GM12878 (cell line): ENCODE measurements at regions of chr15 and their contacts with region 1.

Region 1: DNA sequence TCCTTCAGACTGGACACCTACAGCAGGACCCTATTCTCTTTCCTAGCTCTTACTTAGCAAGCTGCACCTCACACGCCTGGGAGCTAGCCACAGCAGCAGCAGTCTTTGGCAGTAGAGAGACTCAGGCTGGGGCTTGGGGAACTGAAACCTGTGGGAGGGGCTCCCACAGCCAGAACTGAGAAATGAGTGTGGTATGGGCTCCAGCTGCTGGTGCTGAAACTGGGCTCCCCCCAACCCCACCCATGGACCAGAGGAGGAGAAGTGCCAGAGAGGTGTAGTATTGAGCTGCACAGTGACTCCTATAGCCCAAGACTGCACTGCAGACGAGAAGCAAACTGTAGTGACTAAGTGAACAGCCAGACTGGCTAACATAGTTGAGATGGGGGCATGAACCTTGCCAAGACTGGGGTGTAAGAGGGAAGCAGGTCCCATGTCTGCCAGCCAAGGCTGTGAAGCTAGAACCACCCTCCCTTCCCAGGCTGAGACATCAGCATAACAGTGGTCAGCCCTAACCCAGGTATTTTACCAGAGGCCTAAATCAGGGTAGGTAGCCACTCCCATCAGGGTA is 62.5 kb downstream of the MYO5A start:
- DNase-seq: peak; percentile 97
- ATAC-seq: peak; percentile 94
- H3K4me3 ChIP-seq: peak overlapping the region; percentile 58; the same call in 1 of the 2 replicates
- H3K27ac ChIP-seq: peak overlapping the region; percentile 99
- H3K4me1 ChIP-seq: peaks cover 47% of the 10 kb centered on the region
- H3K27me3 ChIP-seq: no peaks in the 10 kb centered on the region
- CTCF ChIP-seq: peak; percentile 55 to 66 (median 66)
- EP300 ChIP-seq: peak; percentile 91 to 98
- POLR2A ChIP-seq: peak; percentile 69
- RAD21 ChIP-seq: peak; percentile 70

Region 2: GRCh38 chr15:52200831-52201365 is 265.3 kb before region 1 on chr15:
- CTCF ChIA-PET with region 1: no interaction called
- POLR2A ChIA-PET with region 1: no interaction called
- RAD21 ChIA-PET with region 1: no interaction called
- SMC1A ChIA-PET with region 1: no interaction called
- in situ Hi-C with region 1: no loop called
- intact Hi-C with region 1: no loop called
- DNase-seq: no peak
- ATAC-seq: no peak
- H3K4me3 ChIP-seq: no peak overlapping the region
- H3K27ac ChIP-seq: no peak overlapping the region
- H3K4me1 ChIP-seq: peaks cover 3% of the 10 kb centered on the region; the same call in 1 of the 2 replicates
- H3K27me3 ChIP-seq: no peaks in the 10 kb centered on the region
- CTCF ChIP-seq: no peak
- EP300 ChIP-seq: no peak
- POLR2A ChIP-seq: no peak
- RAD21 ChIP-seq: no peak

Region 3: GRCh38 chr15:52256366-52256765 is 209.9 kb before region 1 on chr15:
- CTCF ChIA-PET with region 1: interaction called, 98 read pairs
- POLR2A ChIA-PET with region 1: no interaction called
- RAD21 ChIA-PET with region 1: interaction called, 32 read pairs
- SMC1A ChIA-PET with region 1: interaction called, 30 read pairs
- in situ Hi-C with region 1: no loop called
- intact Hi-C with region 1: loop called (anchors 5 kb)
- DNase-seq: peak; percentile 76
- ATAC-seq: peak; percentile 71
- H3K4me3 ChIP-seq: no peak overlapping the region
- H3K27ac ChIP-seq: no peak overlapping the region
- H3K4me1 ChIP-seq: peaks cover 12% of the 10 kb centered on the region
- H3K27me3 ChIP-seq: no peaks in the 10 kb centered on the region
- CTCF ChIP-seq: peak; percentile 68 to 82 (median 71)
- EP300 ChIP-seq: no peak
- POLR2A ChIP-seq: no peak
- RAD21 ChIP-seq: peak; percentile 88

Region 4: GRCh38 chr15:52337198-52337853 is 128.9 kb before region 1 on chr15:
- CTCF ChIA-PET with region 1: interaction called, 42 read pairs
- POLR2A ChIA-PET with region 1: interaction called, 4 read pairs
- RAD21 ChIA-PET with region 1: interaction called, 43 read pairs
- SMC1A ChIA-PET with region 1: interaction called, 81 read pairs
- in situ Hi-C with region 1: no loop called
- intact Hi-C with region 1: no loop called
- DNase-seq: no peak
- ATAC-seq: no peak
- H3K4me3 ChIP-seq: no peak overlapping the region
- H3K27ac ChIP-seq: no peak overlapping the region
- H3K4me1 ChIP-seq: no peaks in the 10 kb centered on the region
- H3K27me3 ChIP-seq: no peaks in the 10 kb centered on the region
- CTCF ChIP-seq: no peak
- EP300 ChIP-seq: no peak
- POLR2A ChIP-seq: no peak
- RAD21 ChIP-seq: no peak

Region 5: DNA sequence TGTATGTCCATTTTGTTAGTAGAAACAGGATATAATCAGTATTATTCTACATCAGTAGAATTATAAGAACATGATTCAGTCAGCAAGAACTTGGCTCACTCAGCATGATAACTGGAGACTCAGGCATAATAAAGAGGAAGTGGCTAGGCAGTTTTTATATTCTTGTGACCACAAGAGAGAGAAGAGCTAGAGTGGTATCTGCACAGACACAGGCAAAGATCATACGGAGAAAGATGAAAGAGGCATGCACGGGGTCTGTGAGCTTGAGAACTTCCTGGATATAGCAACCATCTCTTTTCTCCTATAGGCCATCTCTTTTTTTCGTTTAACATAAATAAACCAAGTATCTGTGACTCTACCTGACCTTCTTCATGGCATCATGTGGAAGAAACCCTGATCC is 15.7 kb after region 1 on chr15:
- CTCF ChIA-PET with region 1: interaction called, 17 read pairs
- POLR2A ChIA-PET with region 1: interaction called, 3 read pairs
- RAD21 ChIA-PET with region 1: interaction called, 22 read pairs
- SMC1A ChIA-PET with region 1: interaction called, 36 read pairs
- in situ Hi-C with region 1: no loop called
- intact Hi-C with region 1: no loop called
- DNase-seq: peak; percentile 81
- ATAC-seq: peak; percentile 98
- H3K4me3 ChIP-seq: peak overlapping the region; percentile 14; the same call in 1 of the 2 replicates
- H3K27ac ChIP-seq: peak overlapping the region; percentile 76
- H3K4me1 ChIP-seq: peaks cover 36% of the 10 kb centered on the region
- H3K27me3 ChIP-seq: no peaks in the 10 kb centered on the region
- CTCF ChIP-seq: no peak
- EP300 ChIP-seq: peak in 1 of 2 experiments; percentile 73; a peak in 3 of 4 replicates
- POLR2A ChIP-seq: no peak
- RAD21 ChIP-seq: no peak

Region 6: GRCh38 chr15:52528991-52529926 is 63.0 kb after region 1 on chr15:
- CTCF ChIA-PET with region 1: interaction called, 12 read pairs
- POLR2A ChIA-PET with region 1: no interaction called
- RAD21 ChIA-PET with region 1: interaction called, 42 read pairs
- SMC1A ChIA-PET with region 1: interaction called, 12 read pairs
- in situ Hi-C with region 1: no loop called
- intact Hi-C with region 1: loop called (anchors 1 kb)
- DNase-seq: no peak
- ATAC-seq: peak; percentile 83
- H3K4me3 ChIP-seq: peak overlapping the region; percentile 85
- H3K27ac ChIP-seq: peak overlapping the region; percentile 39; the same call in 1 of the 2 replicates
- H3K4me1 ChIP-seq: peaks cover 3% of the 10 kb centered on the region
- H3K27me3 ChIP-seq: no peaks in the 10 kb centered on the region
- CTCF ChIP-seq: peak in 1 of 3 experiments; percentile 35; a peak in 2 of 6 replicates
- EP300 ChIP-seq: no peak
- POLR2A ChIP-seq: 0 out of 2 replicates have a peak, but pooled peaks have one; percentile 18
- RAD21 ChIP-seq: peak; percentile 46

Region 7: GRCh38 chr15:52568601-52569256 is 102.5 kb after region 1 on chr15 and contains the start of gene ARPP19:
- CTCF ChIA-PET with region 1: interaction called, 32 read pairs
- POLR2A ChIA-PET with region 1: interaction called, 4 read pairs
- RAD21 ChIA-PET with region 1: interaction called, 37 read pairs
- SMC1A ChIA-PET with region 1: interaction called, 49 read pairs
- in situ Hi-C with region 1: no loop called
- intact Hi-C with region 1: loop called (anchors 5 kb)
- DNase-seq: peak; percentile 69
- ATAC-seq: peak; percentile 81
- H3K4me3 ChIP-seq: peak within 1 kb of the TSS; percentile 72
- H3K27ac ChIP-seq: peak within 1 kb of the TSS; percentile 93
- H3K4me1 ChIP-seq: peaks cover 7% of the 10 kb centered on the region
- H3K27me3 ChIP-seq: no peaks in the 10 kb centered on the region
- CTCF ChIP-seq: peak in 1 of 3 experiments; percentile 39; a peak in 2 of 6 replicates
- EP300 ChIP-seq: no peak
- POLR2A ChIP-seq: peak; percentile 81
- RAD21 ChIP-seq: peak; percentile 34
- polyA plus RNA-seq, gene ARPP19: 77.2 to 114 TPM

Region 8: GRCh38 chr15:52735231-52736089 is 269.2 kb after region 1 on chr15:
- CTCF ChIA-PET with region 1: interaction called, 4 read pairs
- POLR2A ChIA-PET with region 1: interaction called, 3 read pairs
- RAD21 ChIA-PET with region 1: interaction called, 15 read pairs
- SMC1A ChIA-PET with region 1: interaction called, 15 read pairs
- in situ Hi-C with region 1: no loop called
- intact Hi-C with region 1: loop called (anchors 5 kb)
- DNase-seq: peak; percentile 64
- ATAC-seq: peak; percentile 96
- H3K4me3 ChIP-seq: no peak overlapping the region
- H3K27ac ChIP-seq: no peak overlapping the region
- H3K4me1 ChIP-seq: no peaks in the 10 kb centered on the region
- H3K27me3 ChIP-seq: no peaks in the 10 kb centered on the region
- CTCF ChIP-seq: peak; percentile 58 to 88 (median 72)
- EP300 ChIP-seq: no peak
- POLR2A ChIP-seq: no peak
- RAD21 ChIP-seq: peak; percentile 98

Region 9: DNA sequence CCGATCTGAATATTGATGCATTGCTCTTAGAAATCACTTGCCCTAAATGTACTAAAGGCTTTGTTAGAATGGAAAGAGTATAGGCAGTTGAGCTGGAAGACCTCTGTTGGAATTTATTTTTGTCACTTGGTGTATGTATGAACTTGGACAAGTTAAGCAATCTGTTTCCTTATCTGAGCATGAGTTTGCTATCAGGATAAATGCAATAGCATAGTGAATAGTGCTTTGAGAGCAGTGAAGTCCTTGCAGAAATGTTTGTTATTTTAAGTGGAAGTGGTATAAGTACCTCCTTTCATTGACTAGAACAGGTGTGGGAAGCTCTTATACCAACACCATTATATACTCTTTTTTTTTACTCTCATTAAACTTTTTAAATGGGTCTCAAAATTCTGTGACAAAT is 470.3 kb after region 1 on chr15:
- CTCF ChIA-PET with region 1: no interaction called
- POLR2A ChIA-PET with region 1: no interaction called
- RAD21 ChIA-PET with region 1: no interaction called
- SMC1A ChIA-PET with region 1: no interaction called
- in situ Hi-C with region 1: no loop called
- intact Hi-C with region 1: no loop called
- DNase-seq: no peak
- ATAC-seq: no peak
- H3K4me3 ChIP-seq: no peak overlapping the region
- H3K27ac ChIP-seq: no peak overlapping the region
- H3K4me1 ChIP-seq: no peaks in the 10 kb centered on the region
- H3K27me3 ChIP-seq: 0 out of 4 replicates have a peak, but pooled peaks cover 0 to 2% of the 10 kb centered on the region in 2 experiments
- CTCF ChIP-seq: no peak
- EP300 ChIP-seq: no peak
- POLR2A ChIP-seq: no peak
- RAD21 ChIP-seq: no peak